Activated CD8-positive, alpha-beta T cell treated with anti-CD3 and anti-CD28 coated beads, Interleukin-2, amount 10 ng/mL, durations not matched to agents 7 days and 5 days (primary cell): ENCODE measurements at regions of chrX and their contacts with region 1.

Region 1: GRCh38 chrX:71181910-71182799 is 37.5 kb downstream of the NLGN3 start:
- DNase-seq: peak; percentile 91
- ATAC-seq: peak; percentile 94
- H3K4me3 Mint-ChIP-seq: peak overlapping the region; percentile 84
- H3K27ac Mint-ChIP-seq: peak overlapping the region; percentile 99
- H3K4me1 Mint-ChIP-seq: peaks cover 22% of the 10 kb centered on the region
- H3K27me3 Mint-ChIP-seq: no peaks in the 10 kb centered on the region

Region 2: GRCh38 chrX:70970482-70970995 is 211.6 kb before region 1 on chrX:
- CTCF ChIA-PET with region 1: interaction called, 21 read pairs
- POLR2A ChIA-PET with region 1: no interaction called
- DNase-seq: no peak
- ATAC-seq: no peak
- H3K4me3 Mint-ChIP-seq: peak overlapping the region; percentile 50
- H3K27ac Mint-ChIP-seq: no peak overlapping the region
- H3K4me1 Mint-ChIP-seq: peaks cover 10% of the 10 kb centered on the region
- H3K27me3 Mint-ChIP-seq: peaks cover 3% of the 10 kb centered on the region

Region 3: GRCh38 chrX:71111141-71111843 is 70.9 kb before region 1 on chrX and contains the start of gene IL2RG:
- CTCF ChIA-PET with region 1: no interaction called
- POLR2A ChIA-PET with region 1: interaction called, 23 read pairs
- DNase-seq: peak; percentile 86
- ATAC-seq: peak; percentile 80
- H3K4me3 Mint-ChIP-seq: peak within 1 kb of the TSS; percentile 94
- H3K27ac Mint-ChIP-seq: peak within 1 kb of the TSS; percentile 98
- H3K4me1 Mint-ChIP-seq: peaks cover 42% of the 10 kb centered on the region
- H3K27me3 Mint-ChIP-seq: no peaks in the 10 kb centered on the region
- total RNA-seq, gene IL2RG: 348 to 351 TPM

Region 4: DNA sequence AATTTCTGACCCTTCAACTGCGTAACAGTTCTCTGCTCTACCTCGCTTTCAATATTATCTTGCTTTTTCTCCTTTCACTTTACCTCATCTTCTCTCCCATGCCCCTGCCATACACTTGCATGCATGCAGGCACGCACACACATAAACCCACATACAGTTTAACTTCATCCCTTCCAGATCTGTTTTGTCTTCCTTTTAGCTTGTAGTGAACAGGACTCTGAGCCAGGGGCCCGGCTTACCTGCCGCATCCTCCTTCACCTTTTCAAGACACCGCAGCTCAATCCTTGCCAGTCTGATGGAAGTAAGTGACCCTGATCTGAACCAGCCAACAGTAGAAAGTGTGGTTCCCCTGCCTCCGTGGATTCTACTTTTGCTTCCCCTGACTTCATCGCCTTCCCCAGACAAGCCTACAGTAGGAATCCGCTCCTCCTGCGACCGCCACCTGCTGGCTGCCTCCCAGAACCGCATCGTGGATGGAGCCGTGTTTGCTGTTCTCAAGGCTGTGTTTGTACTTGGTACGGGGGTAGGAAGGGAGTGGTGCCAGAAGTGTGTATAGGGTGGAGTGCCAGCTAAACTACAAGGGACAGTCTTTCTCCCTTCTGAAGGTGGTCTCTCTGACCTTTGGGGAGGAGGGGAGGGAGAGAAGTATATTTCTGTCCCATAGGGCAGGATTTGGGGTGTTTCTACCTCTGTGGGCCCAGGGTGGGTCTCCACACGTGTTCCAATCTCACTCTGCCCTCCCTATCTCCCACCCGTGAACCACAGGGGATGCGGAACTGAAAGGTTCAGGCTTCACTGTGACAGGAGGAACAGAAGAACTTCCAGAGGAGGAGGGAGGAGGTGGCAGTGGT is 53.0 kb before region 1 on chrX:
- CTCF ChIA-PET with region 1: interaction called, 10 read pairs
- POLR2A ChIA-PET with region 1: no interaction called
- DNase-seq: peak; percentile 80
- ATAC-seq: peak; percentile 91
- H3K4me3 Mint-ChIP-seq: no peak overlapping the region
- H3K27ac Mint-ChIP-seq: peak overlapping the region; percentile 80
- H3K4me1 Mint-ChIP-seq: peaks cover 22% of the 10 kb centered on the region
- H3K27me3 Mint-ChIP-seq: no peaks in the 10 kb centered on the region

Region 5: GRCh38 chrX:71198066-71198465 is 15.9 kb after region 1 on chrX:
- CTCF ChIA-PET with region 1: interaction called, 34 read pairs
- POLR2A ChIA-PET with region 1: interaction called, 22 read pairs
- DNase-seq: no peak
- ATAC-seq: peak; percentile 34
- H3K4me3 Mint-ChIP-seq: peak overlapping the region; percentile 86
- H3K27ac Mint-ChIP-seq: peak overlapping the region; percentile 86
- H3K4me1 Mint-ChIP-seq: peaks cover 13% of the 10 kb centered on the region
- H3K27me3 Mint-ChIP-seq: no peaks in the 10 kb centered on the region

Region 6: DNA sequence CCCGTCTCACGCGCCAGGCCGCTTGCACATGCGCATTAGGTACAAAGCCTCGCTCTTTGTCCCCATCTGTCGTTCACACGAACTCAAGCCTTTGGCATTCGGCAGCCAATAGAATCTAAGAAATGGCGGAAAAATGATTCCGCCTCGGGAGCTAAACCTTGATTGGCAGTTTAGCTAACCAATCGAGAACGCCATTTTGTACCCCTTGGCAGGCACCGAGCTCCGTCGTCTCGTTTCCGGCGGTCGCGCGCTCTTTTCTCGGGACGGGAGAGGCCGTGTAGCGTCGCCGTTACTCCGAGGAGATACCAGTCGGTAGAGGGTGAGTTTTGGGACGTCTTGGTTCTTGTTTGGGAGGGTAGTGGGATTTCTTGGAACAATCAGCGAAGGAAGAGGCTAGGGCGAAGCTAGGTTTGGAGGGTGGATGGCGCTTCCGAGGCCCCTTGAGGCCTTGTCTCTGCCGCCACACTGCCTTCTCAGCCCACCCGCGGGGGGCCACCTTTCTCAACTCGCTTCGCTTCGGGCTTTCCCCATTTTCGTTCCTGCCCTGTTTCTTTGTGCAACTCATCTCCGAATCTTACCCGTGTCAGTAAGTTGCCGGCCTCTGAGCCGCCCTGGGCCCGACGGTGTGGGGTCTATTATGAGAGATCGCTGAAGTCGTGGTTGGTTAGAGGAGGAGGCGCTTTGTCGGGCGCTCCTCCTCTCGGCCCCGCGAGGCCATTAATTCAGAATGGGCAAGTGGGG is 101.4 kb after region 1 on chrX and contains the start of gene NONO:
- CTCF ChIA-PET with region 1: interaction called, 12 read pairs
- POLR2A ChIA-PET with region 1: interaction called, 33 read pairs
- DNase-seq: peak; percentile 94
- ATAC-seq: peak; percentile 85
- H3K4me3 Mint-ChIP-seq: peak within 1 kb of the TSS; percentile 97
- H3K27ac Mint-ChIP-seq: peak within 1 kb of the TSS; percentile 100
- H3K4me1 Mint-ChIP-seq: peaks cover 17% of the 10 kb centered on the region
- H3K27me3 Mint-ChIP-seq: no peaks in the 10 kb centered on the region
- total RNA-seq, gene NONO: 446 to 478 TPM

Region 7: GRCh38 chrX:71365876-71366673 is 183.9 kb after region 1 on chrX and contains the start of gene TAF1:
- CTCF ChIA-PET with region 1: no interaction called
- POLR2A ChIA-PET with region 1: interaction called, 18 read pairs
- DNase-seq: peak; percentile 95
- ATAC-seq: peak; percentile 93
- H3K4me3 Mint-ChIP-seq: peak within 1 kb of the TSS; percentile 97
- H3K27ac Mint-ChIP-seq: peak within 1 kb of the TSS; percentile 99
- H3K4me1 Mint-ChIP-seq: peaks cover 20% of the 10 kb centered on the region
- H3K27me3 Mint-ChIP-seq: no peaks in the 10 kb centered on the region
- total RNA-seq, gene TAF1: 35.0 to 43.6 TPM